WTC11 (cell line): ENCODE measurements at regions of chr19 and their contacts with region 1.

Region 1: DNA sequence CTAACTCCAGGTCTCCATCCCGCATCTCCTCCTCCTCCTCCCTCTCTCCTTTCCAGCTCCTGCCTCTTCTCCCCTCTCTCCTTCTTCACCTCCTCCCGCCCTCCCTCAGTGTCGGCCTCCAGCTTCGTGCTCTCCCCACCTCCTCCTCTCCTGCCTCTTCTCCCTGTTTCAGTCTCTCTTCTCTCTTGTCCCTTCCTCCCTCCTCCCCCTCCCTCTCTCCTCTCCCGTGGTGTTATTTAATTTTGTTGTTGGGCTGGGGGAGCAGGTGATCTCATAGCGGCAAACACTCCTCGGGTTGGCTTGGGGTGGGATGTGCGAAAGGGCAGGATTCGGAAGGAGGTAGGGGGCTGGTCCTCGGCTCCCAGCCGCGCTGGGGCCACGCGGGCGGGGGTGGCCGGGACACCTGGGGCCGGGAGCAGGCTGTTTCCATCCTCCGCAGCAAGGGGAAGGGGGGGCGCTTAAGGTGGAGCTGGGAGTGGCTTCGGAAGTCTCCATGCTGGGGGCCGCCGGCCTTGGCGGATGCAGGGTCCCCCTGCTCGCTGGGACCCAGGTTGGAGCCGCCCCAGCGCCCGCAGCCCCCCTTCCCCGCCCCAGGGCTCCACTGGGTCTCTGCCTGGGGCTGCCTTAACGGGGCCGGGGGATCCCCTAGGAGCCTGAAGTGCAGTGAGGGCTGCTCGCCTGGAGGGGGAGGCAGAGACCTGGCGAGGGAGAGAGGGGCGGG is at the start of gene CA11:
- DNase-seq: peak; percentile 97
- ATAC-seq: peak; percentile 85
- H3K4me3 Mint-ChIP-seq: peak within 1 kb of the TSS; percentile 85
- H3K27ac Mint-ChIP-seq: peak within 1 kb of the TSS; percentile 84
- H3K4me1 Mint-ChIP-seq: peaks cover 9% of the 10 kb centered on the region
- H3K27me3 Mint-ChIP-seq: no peaks in the 10 kb centered on the region; the same call in none of the 2 replicates
- CTCF ChIP-seq: peak; percentile 72
- total RNA-seq, gene CA11: 41.4 to 53.7 TPM (median 47.5 TPM) in 3 replicates

Region 2: GRCh38 chr19:48553676-48554386 is 92.3 kb before region 1 on chr19:
- CTCF ChIA-PET with region 1: no interaction called
- POLR2A ChIA-PET with region 1: no interaction called
- DNase-seq: peak; percentile 51
- ATAC-seq: peak; percentile 31
- H3K4me3 Mint-ChIP-seq: peak overlapping the region; percentile 34
- H3K27ac Mint-ChIP-seq: peak overlapping the region; percentile 86
- H3K4me1 Mint-ChIP-seq: peaks cover 25% of the 10 kb centered on the region
- H3K27me3 Mint-ChIP-seq: no peaks in the 10 kb centered on the region
- CTCF ChIP-seq: no peak

Region 3: DNA sequence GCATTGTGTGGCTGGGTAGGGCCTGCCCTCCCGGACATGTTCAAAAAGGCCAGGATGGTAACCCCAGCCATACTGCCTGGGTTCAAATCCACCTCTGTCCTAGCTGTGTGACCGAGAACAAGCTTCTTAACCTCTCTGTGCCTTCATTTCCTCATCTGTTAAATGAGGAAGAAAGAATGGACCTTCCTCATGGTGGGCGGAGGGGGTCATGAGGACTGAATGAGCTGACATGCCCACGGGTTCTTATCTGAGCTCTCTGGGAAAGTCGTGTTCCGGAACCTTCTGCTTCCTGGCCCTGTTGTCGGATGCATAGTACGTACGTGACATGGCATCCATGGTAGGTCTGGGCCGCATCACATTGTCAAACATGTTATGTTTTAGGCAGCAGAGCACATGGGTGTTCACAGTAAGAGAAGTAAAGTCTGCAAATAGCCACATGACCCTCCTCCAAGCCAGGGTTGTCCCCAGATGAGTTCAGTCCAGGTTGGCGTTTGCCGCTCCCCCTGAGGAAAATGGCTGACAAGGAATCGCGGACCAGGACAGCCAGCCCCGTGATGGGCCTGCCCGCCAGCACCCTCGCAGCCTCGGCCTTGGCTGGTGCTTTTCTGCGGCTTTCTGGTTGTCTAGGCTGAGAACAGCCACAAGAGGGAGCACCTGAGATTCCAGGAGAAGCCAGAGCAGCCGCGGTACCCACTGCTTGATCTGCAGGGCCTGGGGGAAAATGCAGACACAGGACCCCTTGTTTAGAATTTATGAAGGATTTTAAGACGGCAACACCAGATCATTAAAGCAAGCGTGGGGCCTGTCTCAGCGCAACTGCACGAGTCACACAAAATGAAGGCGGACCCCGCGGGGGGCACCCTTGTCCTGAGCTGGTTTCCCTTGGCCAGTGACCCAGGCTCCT is 29.0 kb after region 1 on chr19:
- CTCF ChIA-PET with region 1: interaction called, 29 read pairs
- POLR2A ChIA-PET with region 1: interaction called, 3 read pairs
- DNase-seq: peak; percentile 91
- ATAC-seq: peak; percentile 85
- H3K4me3 Mint-ChIP-seq: no peak overlapping the region; the same call in 1 of the 2 replicates
- H3K27ac Mint-ChIP-seq: no peak overlapping the region
- H3K4me1 Mint-ChIP-seq: peaks cover 26% of the 10 kb centered on the region
- H3K27me3 Mint-ChIP-seq: peaks cover 17% of the 10 kb centered on the region
- CTCF ChIP-seq: peak; percentile 81

Region 4: GRCh38 chr19:48713864-48714758 is 68.0 kb after region 1 on chr19:
- CTCF ChIA-PET with region 1: interaction called, 13 read pairs
- POLR2A ChIA-PET with region 1: interaction called, 3 read pairs
- DNase-seq: peak; percentile 99
- ATAC-seq: peak; percentile 88
- H3K4me3 Mint-ChIP-seq: peak overlapping the region; percentile 86
- H3K27ac Mint-ChIP-seq: no peak overlapping the region
- H3K4me1 Mint-ChIP-seq: peaks cover 32% of the 10 kb centered on the region
- H3K27me3 Mint-ChIP-seq: peaks cover 3% of the 10 kb centered on the region; the same call in 1 of the 2 replicates
- CTCF ChIP-seq: no peak

Region 5: DNA sequence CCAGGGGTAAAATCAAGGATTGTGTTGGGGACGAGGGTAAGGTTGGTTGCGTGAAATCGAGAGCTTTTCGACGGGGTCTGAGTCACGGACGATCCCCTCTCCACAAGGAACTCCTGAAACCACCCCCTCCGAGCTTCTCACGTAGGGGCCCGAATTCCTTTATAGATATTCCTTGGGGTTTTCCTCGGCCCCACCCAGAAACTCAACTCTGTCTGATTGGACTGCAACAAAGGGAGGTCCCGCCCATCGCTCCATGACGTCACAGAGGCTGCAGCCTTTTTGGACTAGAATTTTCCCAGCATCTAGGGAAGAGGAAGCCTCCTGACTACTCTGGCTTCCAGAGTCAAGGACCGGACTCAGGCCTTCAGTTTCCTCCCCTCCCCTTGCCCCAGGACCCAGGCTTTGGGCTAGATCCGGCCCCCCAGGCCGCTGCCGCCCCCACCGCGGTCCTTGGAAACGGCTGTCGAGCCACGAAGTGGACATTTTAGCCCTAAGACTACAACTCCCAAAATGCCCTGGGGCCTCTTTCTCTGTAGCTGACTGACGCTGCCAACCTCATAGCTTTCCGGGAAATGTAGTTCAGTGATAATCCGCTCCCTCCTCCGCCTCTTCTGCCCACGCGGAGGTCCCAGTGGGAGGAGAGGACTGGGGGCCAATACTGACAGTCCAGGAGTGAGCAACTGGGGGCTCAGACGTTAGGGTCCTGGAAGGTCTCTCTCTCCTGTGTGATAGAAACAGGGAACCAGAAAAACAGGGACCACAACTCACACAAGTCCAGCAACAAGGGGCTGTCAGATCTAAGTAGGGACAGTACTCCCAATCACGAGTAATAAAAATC is 100.8 kb after region 1 on chr19 and contains the start of gene IZUMO1:
- CTCF ChIA-PET with region 1: interaction called, 11 read pairs
- POLR2A ChIA-PET with region 1: interaction called, 17 read pairs
- DNase-seq: peak; percentile 91
- ATAC-seq: peak; percentile 76
- H3K4me3 Mint-ChIP-seq: peak within 1 kb of the TSS; percentile 71
- H3K27ac Mint-ChIP-seq: peak within 1 kb of the TSS; percentile 97
- H3K4me1 Mint-ChIP-seq: peaks cover 27% of the 10 kb centered on the region
- H3K27me3 Mint-ChIP-seq: peaks cover 19% of the 10 kb centered on the region
- CTCF ChIP-seq: no peak
- total RNA-seq, gene IZUMO1: 1.3 to 2.2 TPM (median 1.3 TPM) in 3 replicates

Region 6: GRCh38 chr19:48795055-48795684 is 149.0 kb after region 1 on chr19:
- CTCF ChIA-PET with region 1: interaction called, 13 read pairs
- POLR2A ChIA-PET with region 1: no interaction called
- DNase-seq: peak; percentile 94
- ATAC-seq: peak; percentile 96
- H3K4me3 Mint-ChIP-seq: peak overlapping the region; percentile 96
- H3K27ac Mint-ChIP-seq: peak overlapping the region; percentile 98
- H3K4me1 Mint-ChIP-seq: peaks cover 18% of the 10 kb centered on the region
- H3K27me3 Mint-ChIP-seq: no peaks in the 10 kb centered on the region; the same call in none of the 2 replicates
- CTCF ChIP-seq: peak; percentile 92